Panc1 (cell line): ENCODE measurements at regions of chr6 and their contacts with region 1.

Region 1: DNA sequence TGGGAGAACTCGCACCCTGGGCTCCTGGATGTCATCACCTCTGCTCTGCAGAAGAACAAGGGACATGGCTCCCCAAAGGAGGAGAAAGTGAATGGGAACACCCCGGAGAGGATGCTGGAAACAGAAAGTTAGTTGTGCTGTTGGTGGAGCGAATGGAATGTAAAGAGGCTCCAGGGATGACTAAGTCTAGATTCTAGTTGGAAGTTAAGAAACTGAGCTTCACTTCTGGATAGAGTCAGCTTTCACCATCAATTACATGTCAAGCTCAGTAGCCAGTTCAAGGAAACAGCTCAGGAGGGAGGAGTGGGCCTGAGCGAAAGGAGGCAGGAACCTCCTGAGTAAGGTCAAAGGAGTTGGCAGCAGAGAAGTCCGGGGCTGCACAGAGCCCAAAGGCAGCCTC is 132.1 kb upstream of the ARID1B start:
- DNase-seq: no peak
- ATAC-seq: no peak
- H3K4me3 ChIP-seq: no peak overlapping the region
- H3K27ac ChIP-seq: no peak overlapping the region
- H3K4me1 ChIP-seq: no peaks in the 10 kb centered on the region
- H3K27me3 ChIP-seq: no peaks in the 10 kb centered on the region
- CTCF ChIP-seq: no peak

Region 2: DNA sequence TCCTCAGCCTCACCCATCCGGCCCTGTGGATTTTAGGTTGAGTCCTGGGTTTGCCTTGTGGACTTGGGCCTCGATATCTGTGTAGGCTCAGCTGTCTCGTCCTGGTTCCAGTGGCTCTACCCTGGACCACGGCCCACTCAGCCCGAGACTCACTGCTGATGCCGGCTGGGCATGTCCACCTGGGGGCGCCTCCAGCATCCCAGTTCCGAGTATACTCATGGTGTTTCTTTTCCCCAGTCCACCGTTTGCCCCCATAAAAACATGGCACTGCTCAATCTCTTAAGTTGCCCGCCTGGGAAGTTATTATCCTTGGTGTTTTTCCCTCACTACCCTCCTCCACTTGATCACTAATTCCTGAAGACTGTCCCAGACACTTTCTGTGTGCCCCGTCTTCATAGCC is 231.2 kb after region 1 on chr6:
- CTCF ChIA-PET with region 1: no interaction called
- POLR2A ChIA-PET with region 1: no interaction called
- in situ Hi-C with region 1: no loop called
- intact Hi-C with region 1: no loop called
- DNase-seq: no peak
- ATAC-seq: no peak; the same call in 1 of the 2 replicates
- H3K4me3 ChIP-seq: no peak overlapping the region
- H3K27ac ChIP-seq: no peak overlapping the region
- H3K4me1 ChIP-seq: 0 out of 2 replicates have a peak, but pooled peaks cover 13% of the 10 kb centered on the region
- H3K27me3 ChIP-seq: no peaks in the 10 kb centered on the region
- CTCF ChIP-seq: peak; percentile 70

Region 3: DNA sequence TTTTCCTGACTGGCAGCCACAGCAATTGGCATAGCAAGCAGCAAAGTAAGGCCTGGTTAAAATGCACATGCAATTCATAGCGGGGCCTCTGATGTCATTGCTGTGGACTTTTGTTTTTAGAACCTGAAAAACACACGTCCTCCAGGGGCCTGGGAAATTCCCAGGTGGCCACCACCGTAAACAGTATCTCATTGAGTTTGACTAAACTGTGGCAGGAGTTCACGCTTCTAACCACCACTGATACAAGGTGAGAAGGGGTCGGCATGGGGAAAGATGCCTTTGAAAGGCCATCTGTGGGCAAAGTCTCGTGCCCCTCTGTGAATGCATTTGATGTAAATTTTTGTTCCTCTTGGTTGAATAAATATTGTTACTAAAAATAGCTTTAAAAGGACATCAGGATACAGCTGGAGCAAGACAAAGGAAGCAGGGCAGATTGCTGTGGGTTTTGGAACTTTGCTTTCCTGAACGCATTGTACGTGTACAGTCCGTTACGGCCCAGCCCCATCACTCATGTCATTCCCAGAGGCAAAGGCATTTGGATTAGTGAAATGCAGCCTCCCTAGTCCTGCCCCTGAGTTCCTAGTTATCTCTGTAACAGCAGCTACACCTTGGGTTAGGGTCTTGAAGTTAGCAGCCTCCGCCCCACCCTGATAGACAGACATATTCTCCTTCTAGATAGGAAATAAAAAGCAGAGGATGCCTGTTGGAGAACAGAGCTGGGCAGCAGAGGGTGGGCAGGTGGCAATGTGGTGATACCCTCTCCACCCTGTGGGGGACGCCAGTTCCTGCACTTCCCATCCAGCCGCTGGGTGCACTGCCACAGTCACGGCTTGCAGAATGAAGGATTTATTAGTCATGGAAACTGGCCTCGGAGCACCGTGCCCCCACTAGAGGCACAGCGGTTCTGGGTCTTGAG is 816.2 kb after region 1 on chr6:
- CTCF ChIA-PET with region 1: interaction called, 15 read pairs
- POLR2A ChIA-PET with region 1: no interaction called
- in situ Hi-C with region 1: no loop called
- intact Hi-C with region 1: no loop called
- DNase-seq: no peak
- ATAC-seq: peak; percentile 73
- H3K4me3 ChIP-seq: no peak overlapping the region
- H3K27ac ChIP-seq: no peak overlapping the region
- H3K4me1 ChIP-seq: peaks cover 10% of the 10 kb centered on the region
- H3K27me3 ChIP-seq: no peaks in the 10 kb centered on the region
- CTCF ChIP-seq: peak; percentile 67; the same call in 1 of the 2 replicates